HEK293 (cell line): ENCODE measurements at regions of chr14 and their contacts with region 1.

Region 1: GRCh38 chr14:61566537-61567225 is 128.6 kb upstream of the HIF1A start:
- H3K4me3 ChIP-seq: no peak overlapping the region
- H3K27ac ChIP-seq: no peak overlapping the region
- H3K4me1 ChIP-seq: peaks cover 8% of the 10 kb centered on the region; the same call in 1 of the 2 replicates
- CTCF ChIP-seq: no peak

Region 2: GRCh38 chr14:61547186-61548086 is 19.2 kb before region 1 on chr14:
- CTCF ChIA-PET with region 1: no interaction called
- POLR2A ChIA-PET with region 1: no interaction called
- H3K4me3 ChIP-seq: no peak overlapping the region
- H3K27ac ChIP-seq: no peak overlapping the region
- H3K4me1 ChIP-seq: no peaks in the 10 kb centered on the region
- CTCF ChIP-seq: no peak

Region 3: DNA sequence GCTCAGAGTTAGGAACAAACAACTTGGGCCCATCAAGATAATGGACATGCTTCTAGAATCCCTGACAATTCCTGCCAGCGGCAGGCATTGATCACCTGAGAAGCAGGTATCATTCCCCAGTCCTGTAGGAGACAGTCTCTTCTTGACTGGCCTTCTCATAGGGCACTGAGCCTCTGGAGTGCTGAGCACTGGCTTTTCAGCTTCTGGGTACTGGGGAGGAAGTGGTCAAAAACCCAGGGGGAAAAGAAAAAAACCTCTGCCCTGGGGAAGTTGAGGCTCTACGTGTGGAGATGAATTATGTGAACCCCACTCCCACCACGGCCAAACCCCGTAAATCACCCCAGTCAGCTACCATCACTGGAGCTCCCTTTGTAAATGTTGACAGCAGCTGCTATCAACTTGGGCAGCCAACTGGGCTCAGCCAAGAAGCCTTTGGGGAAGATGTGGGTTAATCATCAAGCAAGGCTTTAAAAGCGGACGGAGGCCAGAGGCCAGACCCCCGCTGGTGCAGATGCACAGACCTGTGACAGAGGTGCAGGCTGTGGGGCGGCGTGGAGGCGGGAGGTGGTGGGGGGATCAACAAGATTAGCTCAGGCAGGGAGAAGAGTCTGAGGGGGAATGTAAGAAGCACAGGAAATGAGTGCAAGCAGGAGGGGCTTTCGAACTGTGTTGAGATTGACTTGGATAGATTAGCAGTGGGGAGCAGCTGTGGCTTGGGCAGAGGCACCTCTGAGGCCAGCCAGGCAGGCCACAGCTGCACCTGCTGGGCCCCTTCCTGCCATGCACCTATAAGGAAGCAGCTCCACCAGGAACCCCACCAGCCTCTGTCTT is 23.2 kb after region 1 on chr14:
- CTCF ChIA-PET with region 1: interaction called, 12 read pairs
- POLR2A ChIA-PET with region 1: no interaction called
- H3K4me3 ChIP-seq: no peak overlapping the region
- H3K27ac ChIP-seq: no peak overlapping the region
- H3K4me1 ChIP-seq: peaks cover 25% of the 10 kb centered on the region
- CTCF ChIP-seq: no peak

Region 4: GRCh38 chr14:61719344-61720293 is 152.9 kb after region 1 on chr14:
- CTCF ChIA-PET with region 1: no interaction called
- POLR2A ChIA-PET with region 1: no interaction called
- H3K4me3 ChIP-seq: no peak overlapping the region
- H3K27ac ChIP-seq: no peak overlapping the region
- H3K4me1 ChIP-seq: peaks cover 32% of the 10 kb centered on the region
- CTCF ChIP-seq: no peak